ENCODE measurements at regions of chr12 and their contacts with region 1.

Region 1: DNA sequence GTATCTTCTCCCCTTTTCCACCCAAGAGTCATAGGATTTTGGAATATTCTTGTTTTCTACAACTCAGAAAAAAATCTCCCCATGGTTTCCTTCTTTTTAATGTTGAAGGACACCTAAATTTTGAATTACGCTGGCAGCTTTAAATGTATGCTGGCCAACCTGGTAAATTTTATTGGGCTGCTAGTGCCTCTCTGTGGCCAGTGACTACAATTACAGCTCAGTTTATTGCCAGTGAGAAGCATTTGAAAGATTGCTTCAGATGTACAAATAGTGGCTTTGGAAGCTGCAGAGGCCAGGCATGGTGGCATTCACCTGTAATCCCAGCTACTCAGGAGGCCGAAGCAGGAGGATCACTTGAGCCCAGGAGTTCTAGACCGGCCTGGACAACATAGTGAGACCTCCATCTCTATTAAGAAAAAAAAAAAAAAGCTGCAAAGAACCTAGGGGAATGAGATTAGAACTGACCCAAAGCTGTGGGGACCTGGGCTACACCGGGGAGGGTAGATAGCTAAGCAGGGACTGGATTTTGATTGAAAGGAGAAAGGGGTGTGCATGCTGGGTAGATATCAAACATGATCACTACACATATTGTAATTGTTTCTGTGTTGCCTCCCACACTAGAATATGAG is 7.6 kb upstream of the RAB21 start:
- DNase-seq: no peak
- ATAC-seq: peak; percentile 80

Region 2: DNA sequence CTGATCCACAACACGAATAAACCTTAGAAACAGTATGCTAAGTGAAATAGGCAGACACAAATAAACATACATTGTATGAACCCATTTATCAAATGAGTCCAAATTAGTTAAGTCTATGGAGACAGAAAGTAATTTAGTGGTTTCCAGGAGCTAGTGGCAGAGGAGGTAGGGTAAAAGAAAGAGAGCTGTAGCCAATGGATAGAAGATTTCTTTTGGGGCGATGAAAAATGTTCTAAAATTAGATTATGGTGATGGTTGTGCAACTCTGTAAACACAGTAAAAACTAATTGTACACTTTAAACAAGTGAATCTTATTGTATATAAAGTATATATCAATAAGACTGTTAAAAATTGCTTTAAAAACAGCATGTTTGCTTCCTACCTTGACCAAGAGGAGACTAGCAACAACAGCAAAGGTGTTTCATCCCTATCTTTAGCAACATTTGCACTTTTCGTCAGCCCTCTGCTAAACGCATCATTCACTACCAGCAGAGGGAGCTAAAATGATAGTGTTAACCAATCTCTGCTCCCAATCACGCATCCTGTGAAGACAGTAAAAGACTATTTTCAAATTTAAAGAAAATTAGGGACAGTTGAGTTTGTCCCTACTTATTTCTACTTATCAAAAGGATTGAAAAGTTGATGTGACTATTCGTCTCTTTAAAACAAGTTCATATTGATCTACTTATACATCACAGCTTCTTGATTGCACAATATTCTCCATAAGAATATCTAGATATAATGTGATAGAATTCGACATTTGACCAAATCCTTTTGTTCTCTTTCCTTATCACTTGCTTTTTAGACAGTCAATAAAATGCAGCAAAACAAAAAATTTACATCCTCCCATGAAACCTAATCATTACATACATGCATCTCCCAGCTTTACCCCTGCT is 331.5 kb before region 1 on chr12:
- intact Hi-C with region 1: loop called (anchors 5 kb)
- DNase-seq: no peak
- ATAC-seq: peak; percentile 53

Region 3: GRCh38 chr12:71636704-71637115 is 110.4 kb before region 1 on chr12:
- intact Hi-C with region 1: loop called (anchors 10 kb)
- DNase-seq: no peak
- ATAC-seq: no peak

Region 4: GRCh38 chr12:71857657-71858056 is 110.6 kb after region 1 on chr12:
- intact Hi-C with region 1: no loop called
- DNase-seq: no peak
- ATAC-seq: no peak